ENCODE measurements at regions of chr7 and their contacts with region 1.

Region 1: GRCh38 chr7:25862260-25863037 is 289.5 kb upstream of the NFE2L3 start:
- DNase-seq: peak; percentile 32 to 95 (median 49)
- ATAC-seq: peak; percentile 93
- H3K4me3 ChIP-seq: peak overlapping the region; percentile 4
- H3K4me3 Mint-ChIP-seq: peak overlapping the region in 8 of 10 donors; percentile 38 to 87 (median 61)
- H3K27ac ChIP-seq: no peak overlapping the region
- H3K27ac Mint-ChIP-seq: peak overlapping the region in 8 of 9 donors; percentile 14 to 88 (median 84)
- H3K4me1 ChIP-seq: peaks cover 0 to 6% of the 10 kb centered on the region in 2 donors
- H3K4me1 Mint-ChIP-seq: peaks cover 8 to 46% (median 20%) of the 10 kb centered on the region in 7 donors
- H3K27me3 ChIP-seq: peaks cover 35 to 87% of the 10 kb centered on the region in 2 donors
- H3K27me3 Mint-ChIP-seq: peaks cover 23 to 82% (median 62%) of the 10 kb centered on the region in 5 donors

Region 2: DNA sequence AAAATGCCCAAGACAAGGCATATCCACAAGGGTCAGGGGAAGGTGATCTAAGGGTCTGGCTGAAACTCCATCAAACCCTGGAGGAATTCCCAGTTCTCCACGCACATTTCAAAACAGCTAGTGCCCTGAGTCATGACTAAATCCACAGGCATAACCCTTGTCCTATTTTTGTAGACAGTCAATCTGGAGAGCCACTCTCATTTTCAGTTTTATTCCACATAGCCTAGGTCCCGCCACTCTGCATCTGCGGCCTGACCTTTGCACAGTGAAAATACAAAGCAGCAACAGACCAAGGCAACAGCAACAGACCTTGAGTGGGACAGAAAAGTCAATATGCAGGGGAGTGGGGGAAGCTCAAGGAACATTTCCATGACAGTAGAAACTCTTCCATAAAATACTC is 432.7 kb before region 1 on chr7:
- CTCF ChIA-PET with region 1: no interaction called
- POLR2A ChIA-PET with region 1: no interaction called
- intact Hi-C with region 1: no loop called
- DNase-seq: no peak
- ATAC-seq: no peak
- H3K4me3 ChIP-seq: no peak overlapping the region
- H3K4me3 Mint-ChIP-seq: no peak overlapping the region
- H3K27ac ChIP-seq: no peak overlapping the region
- H3K27ac Mint-ChIP-seq: no peak overlapping the region
- H3K4me1 ChIP-seq: no peaks in the 10 kb centered on the region
- H3K4me1 Mint-ChIP-seq: peaks cover 0 to 12% (median 8%) of the 10 kb centered on the region in 7 donors
- H3K27me3 ChIP-seq: no peaks in the 10 kb centered on the region
- H3K27me3 Mint-ChIP-seq: peaks cover 0 to 4% (median 0%) of the 10 kb centered on the region in 5 donors

Region 3: GRCh38 chr7:25615003-25615402 is 247.4 kb before region 1 on chr7:
- CTCF ChIA-PET with region 1: no interaction called
- POLR2A ChIA-PET with region 1: no interaction called
- intact Hi-C with region 1: no loop called
- DNase-seq: no peak
- ATAC-seq: no peak
- H3K4me3 ChIP-seq: no peak overlapping the region
- H3K4me3 Mint-ChIP-seq: peak overlapping the region in 1 of 10 donors; percentile 47
- H3K27ac ChIP-seq: no peak overlapping the region
- H3K27ac Mint-ChIP-seq: peak overlapping the region in 3 of 9 donors; percentile 0 to 64 (median 2)
- H3K4me1 ChIP-seq: peaks cover 0 to 40% of the 10 kb centered on the region in 2 donors
- H3K4me1 Mint-ChIP-seq: peaks cover 4 to 98% (median 76%) of the 10 kb centered on the region in 7 donors
- H3K27me3 ChIP-seq: no peaks in the 10 kb centered on the region
- H3K27me3 Mint-ChIP-seq: peaks cover 0 to 3% (median 0%) of the 10 kb centered on the region in 5 donors

Region 4: GRCh38 chr7:25951031-25951948 is 88.8 kb after region 1 on chr7:
- CTCF ChIA-PET with region 1: no interaction called
- POLR2A ChIA-PET with region 1: no interaction called
- intact Hi-C with region 1: loop called in 1 of 2 experiments (anchors 1 kb)
- DNase-seq: peak; percentile 70 to 94 (median 87)
- ATAC-seq: peak; percentile 99
- H3K4me3 ChIP-seq: peak overlapping the region; percentile 61
- H3K4me3 Mint-ChIP-seq: peak overlapping the region; percentile 87 to 94 (median 92)
- H3K27ac ChIP-seq: peak overlapping the region; percentile 52
- H3K27ac Mint-ChIP-seq: peak overlapping the region in 7 of 9 donors; percentile 45 to 87 (median 81)
- H3K4me1 ChIP-seq: peaks cover 7 to 14% of the 10 kb centered on the region in 2 donors
- H3K4me1 Mint-ChIP-seq: peaks cover 16 to 31% (median 20%) of the 10 kb centered on the region in 7 donors
- H3K27me3 ChIP-seq: no peaks in the 10 kb centered on the region
- H3K27me3 Mint-ChIP-seq: peaks cover 0 to 22% (median 5%) of the 10 kb centered on the region in 5 donors

Region 5: DNA sequence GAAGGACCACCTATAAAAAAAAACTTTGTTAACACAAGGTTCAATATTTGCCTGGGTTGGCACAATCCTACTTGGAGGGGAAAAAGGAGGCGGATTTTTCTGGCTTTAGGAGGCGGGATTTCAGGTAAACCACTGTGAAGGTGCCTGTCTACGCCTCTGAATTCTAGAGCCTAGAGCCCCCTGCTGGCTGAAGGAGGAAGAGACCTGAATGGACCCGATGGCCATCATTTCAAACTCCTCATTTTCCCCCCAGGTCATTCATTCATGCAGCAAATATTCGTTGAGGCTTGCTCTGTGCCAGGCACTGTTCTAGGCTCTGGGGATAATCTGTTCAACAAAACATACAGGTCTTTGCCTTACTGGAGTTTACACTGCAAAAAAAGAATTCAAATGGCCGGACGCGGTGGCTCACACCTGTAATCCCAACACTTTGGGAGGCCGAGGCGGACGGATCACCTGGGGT is 199.3 kb after region 1 on chr7:
- CTCF ChIA-PET with region 1: no interaction called
- POLR2A ChIA-PET with region 1: no interaction called
- intact Hi-C with region 1: no loop called
- DNase-seq: peak; percentile 37 to 71 (median 59)
- ATAC-seq: peak; percentile 88
- H3K4me3 ChIP-seq: no peak overlapping the region
- H3K4me3 Mint-ChIP-seq: no peak overlapping the region
- H3K27ac ChIP-seq: no peak overlapping the region
- H3K27ac Mint-ChIP-seq: no peak overlapping the region
- H3K4me1 ChIP-seq: no peaks in the 10 kb centered on the region
- H3K4me1 Mint-ChIP-seq: peaks cover 0 to 13% (median 0%) of the 10 kb centered on the region in 7 donors
- H3K27me3 ChIP-seq: no peaks in the 10 kb centered on the region
- H3K27me3 Mint-ChIP-seq: peaks cover 5 to 33% (median 15%) of the 10 kb centered on the region in 5 donors

Region 6: GRCh38 chr7:26864309-26865093 is 1002.1 kb after region 1 on chr7 and contains the start of gene SKAP2:
- CTCF ChIA-PET with region 1: no interaction called
- POLR2A ChIA-PET with region 1: no interaction called
- intact Hi-C with region 1: loop called in 1 of 2 experiments (anchors 1 kb)
- DNase-seq: peak; percentile 41 to 89 (median 63)
- ATAC-seq: peak; percentile 93
- H3K4me3 ChIP-seq: peak within 1 kb of the TSS; percentile 88
- H3K4me3 Mint-ChIP-seq: peak within 1 kb of the TSS; percentile 72 to 92 (median 88)
- H3K27ac ChIP-seq: peak within 1 kb of the TSS; percentile 23
- H3K27ac Mint-ChIP-seq: peak within 1 kb of the TSS; percentile 36 to 89 (median 74)
- H3K4me1 ChIP-seq: peaks cover 0 to 4% of the 10 kb centered on the region in 2 donors
- H3K4me1 Mint-ChIP-seq: peaks cover 5 to 24% (median 19%) of the 10 kb centered on the region in 7 donors
- H3K27me3 ChIP-seq: peaks cover 0 to 9% of the 10 kb centered on the region in 2 donors
- H3K27me3 Mint-ChIP-seq: peaks cover 46 to 68% (median 49%) of the 10 kb centered on the region in 5 donors
- total RNA-seq, gene SKAP2: 2.7 to 31.4 (median 5.1) TPM

Region 7: GRCh38 chr7:27172823-27173510 is 1310.5 kb after region 1 on chr7:
- CTCF ChIA-PET with region 1: no interaction called
- POLR2A ChIA-PET with region 1: no interaction called
- intact Hi-C with region 1: loop called in 1 of 2 experiments (anchors 2 kb)
- DNase-seq: peak in 2 of 9 donors; percentile 23 to 40
- ATAC-seq: peak; percentile 15
- H3K4me3 ChIP-seq: peak overlapping the region; percentile 36
- H3K4me3 Mint-ChIP-seq: peak overlapping the region in 9 of 10 donors; percentile 23 to 79 (median 69)
- H3K27ac ChIP-seq: no peak overlapping the region
- H3K27ac Mint-ChIP-seq: peak overlapping the region in 1 of 9 donors; percentile 86
- H3K4me1 ChIP-seq: peaks cover 16 to 25% of the 10 kb centered on the region in 2 donors
- H3K4me1 Mint-ChIP-seq: peaks cover 14 to 43% (median 23%) of the 10 kb centered on the region in 7 donors
- H3K27me3 ChIP-seq: peaks cover 32 to 65% of the 10 kb centered on the region in 2 donors
- H3K27me3 Mint-ChIP-seq: peaks cover 59 to 69% (median 67%) of the 10 kb centered on the region in 5 donors

Region 8: GRCh38 chr7:27242555-27243339 is 1380.3 kb after region 1 on chr7 and contains the start of gene EVX1:
- CTCF ChIA-PET with region 1: no interaction called
- POLR2A ChIA-PET with region 1: no interaction called
- intact Hi-C with region 1: loop called in 1 of 2 experiments (anchors 2 kb)
- DNase-seq: peak in 7 of 9 donors; percentile 29 to 74 (median 52)
- ATAC-seq: peak; percentile 60
- H3K4me3 ChIP-seq: no peak within 1 kb of the TSS
- H3K4me3 Mint-ChIP-seq: peak within 1 kb of the TSS in 9 of 10 donors; percentile 32 to 81 (median 57)
- H3K27ac ChIP-seq: no peak within 1 kb of the TSS
- H3K27ac Mint-ChIP-seq: peak within 1 kb of the TSS in 6 of 9 donors; percentile 40 to 84 (median 62)
- H3K4me1 ChIP-seq: peaks cover 0 to 3% of the 10 kb centered on the region in 2 donors
- H3K4me1 Mint-ChIP-seq: peaks cover 4 to 52% (median 46%) of the 10 kb centered on the region in 7 donors
- H3K27me3 ChIP-seq: peaks cover 0 to 37% of the 10 kb centered on the region in 2 donors
- H3K27me3 Mint-ChIP-seq: peaks cover 70 to 88% (median 81%) of the 10 kb centered on the region in 5 donors
- total RNA-seq, gene EVX1: 0.11 TPM in 1 of 5 experiments, not detected in the others